CD4-positive, alpha-beta T cell (primary cell): ENCODE measurements at regions of chr9 and their contacts with region 1.

Region 1: GRCh38 chr9:35732122-35732799 is at the starts of genes CREB3 and TLN1:
- DNase-seq: peak; percentile 90 to 99 (median 96)
- ATAC-seq: peak; percentile 91
- H3K4me3 ChIP-seq: peak within 1 kb of the TSS; percentile 91
- H3K4me3 Mint-ChIP-seq: peak within 1 kb of the TSS; percentile 90
- H3K27ac ChIP-seq: peak within 1 kb of the TSS; percentile 89 to 95
- H3K27ac Mint-ChIP-seq: no peak within 1 kb of the TSS
- H3K4me1 ChIP-seq: peaks cover 71% of the 10 kb centered on the region
- H3K4me1 Mint-ChIP-seq: peaks cover 22% of the 10 kb centered on the region
- H3K27me3 ChIP-seq: no peaks in the 10 kb centered on the region
- H3K27me3 Mint-ChIP-seq: no peaks in the 10 kb centered on the region
- CTCF ChIP-seq: no peak
- total RNA-seq, gene CREB3: 13.7 to 15.4 TPM
- total RNA-seq, gene TLN1: 149 to 151 TPM

Region 2: DNA sequence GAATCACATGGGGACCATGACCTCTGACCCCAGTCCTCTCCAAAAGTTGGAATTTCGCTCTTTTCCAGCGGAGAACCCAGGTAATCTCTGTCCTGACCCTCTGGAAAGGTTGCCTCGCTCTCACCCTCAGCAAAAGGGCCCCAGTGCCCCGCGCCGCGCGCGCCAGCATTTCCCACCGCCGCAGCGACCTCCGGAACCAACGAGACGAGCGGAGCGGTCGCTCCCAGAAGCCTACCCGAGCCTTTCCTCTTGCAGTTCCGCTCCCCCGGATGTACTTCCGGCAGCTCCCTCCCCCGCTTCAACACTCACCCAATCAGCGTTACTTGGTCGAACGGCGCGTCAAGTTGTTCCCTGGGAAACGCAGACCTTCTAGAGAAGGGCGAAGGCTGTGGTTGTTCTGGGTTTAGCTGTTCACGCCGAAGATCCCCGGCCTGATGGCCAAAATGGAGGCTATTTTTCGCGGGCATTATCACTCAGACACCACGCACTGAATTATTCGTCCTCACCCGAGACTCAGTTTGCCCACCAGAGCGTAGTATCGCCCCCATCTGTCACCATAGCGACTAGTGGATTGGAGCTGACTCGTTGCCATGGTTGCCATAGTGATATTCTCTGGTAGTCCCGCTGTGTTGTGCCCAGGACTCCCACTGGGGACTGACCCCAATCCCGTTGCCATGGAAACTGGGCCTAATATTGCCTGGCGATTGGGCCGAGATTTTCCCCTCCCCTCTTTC is 629.2 kb before region 1 on chr9 and contains the start of gene STOML2:
- CTCF ChIA-PET with region 1: no interaction called
- POLR2A ChIA-PET with region 1: no interaction called
- intact Hi-C with region 1: loop called in 1 of 2 experiments (anchors 5 kb)
- DNase-seq: peak; percentile 84 to 97 (median 90)
- ATAC-seq: peak; percentile 98
- H3K4me3 ChIP-seq: peak within 1 kb of the TSS; percentile 99
- H3K4me3 Mint-ChIP-seq: peak within 1 kb of the TSS; percentile 92
- H3K27ac ChIP-seq: peak within 1 kb of the TSS; percentile 77 to 94
- H3K27ac Mint-ChIP-seq: peak within 1 kb of the TSS; percentile 89
- H3K4me1 ChIP-seq: peaks cover 28% of the 10 kb centered on the region
- H3K4me1 Mint-ChIP-seq: peaks cover 36% of the 10 kb centered on the region
- H3K27me3 ChIP-seq: no peaks in the 10 kb centered on the region
- H3K27me3 Mint-ChIP-seq: no peaks in the 10 kb centered on the region
- CTCF ChIP-seq: no peak
- total RNA-seq, gene STOML2: 29.8 to 30.5 TPM

Region 3: DNA sequence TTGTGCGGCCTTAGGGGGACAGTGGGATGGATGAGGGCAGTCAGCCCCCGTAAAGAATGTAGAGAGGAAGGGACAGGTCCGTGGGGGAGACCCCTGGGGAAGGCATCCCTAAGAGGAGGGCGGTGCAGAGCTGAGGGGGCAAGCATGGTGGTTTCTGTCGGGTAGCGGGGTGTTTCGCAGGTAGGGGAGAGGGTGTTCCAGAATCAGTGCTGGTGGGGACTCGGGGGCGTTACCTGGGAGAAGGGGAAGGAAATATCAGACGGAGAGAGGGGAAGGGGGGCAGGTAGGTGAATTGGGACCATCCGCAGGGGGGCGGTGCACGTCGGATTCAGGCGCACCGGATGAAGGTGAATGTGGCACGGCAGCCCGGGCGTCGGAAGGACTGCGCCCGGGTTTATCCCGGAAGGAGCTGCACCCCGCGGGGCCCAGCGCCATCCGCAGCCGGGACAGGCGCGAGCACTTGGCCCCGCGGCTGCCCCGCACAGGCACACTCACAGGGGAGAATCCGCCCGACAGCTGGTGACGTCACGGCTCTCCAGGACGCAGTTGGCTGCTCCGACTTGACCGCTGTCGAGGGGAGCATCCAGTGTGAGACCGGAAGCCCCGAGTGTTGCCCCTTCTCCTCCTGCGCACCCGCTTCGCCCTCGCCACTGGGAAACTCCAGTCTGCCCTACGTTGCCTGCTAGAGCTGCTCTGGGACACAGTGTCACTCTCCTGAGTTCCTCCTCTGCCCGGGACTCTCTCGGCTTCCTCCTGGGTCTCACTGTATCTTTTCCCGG is 115.4 kb before region 1 on chr9:
- CTCF ChIA-PET with region 1: interaction called, 7 read pairs
- POLR2A ChIA-PET with region 1: interaction called, 31 read pairs
- intact Hi-C with region 1: no loop called
- DNase-seq: peak; percentile 42 to 89 (median 62)
- ATAC-seq: peak; percentile 86
- H3K4me3 ChIP-seq: peak overlapping the region; percentile 77
- H3K4me3 Mint-ChIP-seq: peak overlapping the region; percentile 86
- H3K27ac ChIP-seq: peak overlapping the region; percentile 27 to 70
- H3K27ac Mint-ChIP-seq: peak overlapping the region; percentile 72
- H3K4me1 ChIP-seq: peaks cover 40% of the 10 kb centered on the region
- H3K4me1 Mint-ChIP-seq: peaks cover 50% of the 10 kb centered on the region
- H3K27me3 ChIP-seq: no peaks in the 10 kb centered on the region
- H3K27me3 Mint-ChIP-seq: no peaks in the 10 kb centered on the region
- CTCF ChIP-seq: peak; percentile 47

Region 4: DNA sequence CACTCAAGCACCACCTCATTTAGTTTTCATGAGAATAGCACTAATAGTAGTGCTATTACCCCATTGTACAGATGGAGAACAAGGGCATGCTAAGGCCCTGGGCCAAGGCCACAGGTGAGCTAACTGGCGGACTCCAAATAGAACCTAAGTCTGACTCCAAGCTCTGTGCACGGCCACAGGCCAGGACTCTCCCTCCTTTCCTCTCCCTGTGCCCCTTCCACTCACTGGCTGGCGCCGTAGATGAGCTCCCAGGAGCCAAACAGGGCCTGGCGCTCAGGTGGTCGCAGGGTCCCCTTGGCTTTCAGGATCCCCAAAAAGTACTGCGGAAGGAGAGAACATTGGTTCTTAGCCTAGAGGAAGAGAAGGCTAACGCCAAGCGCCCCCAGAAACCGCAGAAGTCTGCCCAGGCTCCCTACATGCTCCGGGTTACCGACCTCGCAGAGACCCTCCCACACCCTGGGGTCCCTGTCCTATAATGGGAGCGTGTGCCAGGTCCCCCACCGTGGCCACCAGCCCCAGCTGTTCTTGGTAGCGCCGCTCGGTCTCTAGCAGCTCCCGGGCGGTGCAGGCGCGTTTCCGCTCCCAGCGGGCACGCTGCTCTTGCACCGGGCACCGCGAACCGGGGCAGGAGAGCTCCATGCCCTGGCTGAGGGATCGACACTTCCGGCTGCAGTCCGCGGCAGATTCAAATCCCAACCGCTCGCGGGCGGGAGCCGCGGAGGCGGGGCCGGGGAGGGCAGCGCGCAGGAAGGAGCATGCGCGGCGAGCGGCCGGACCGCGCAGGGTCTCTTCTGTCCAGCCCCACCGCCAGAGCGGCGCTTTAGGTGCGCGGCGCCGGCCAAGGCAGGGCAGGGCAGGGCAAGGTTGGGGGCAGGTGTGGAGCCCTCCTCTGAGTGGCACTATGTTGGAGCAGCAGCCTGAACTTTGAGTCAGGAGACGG is 67.5 kb before region 1 on chr9 and contains the start of gene ARHGEF39:
- CTCF ChIA-PET with region 1: interaction called, 4 read pairs
- POLR2A ChIA-PET with region 1: interaction called, 61 read pairs
- intact Hi-C with region 1: no loop called
- DNase-seq: peak in 12 of 14 experiments; percentile 35 to 84 (median 55)
- ATAC-seq: peak; percentile 74
- H3K4me3 ChIP-seq: peak within 1 kb of the TSS; percentile 61
- H3K4me3 Mint-ChIP-seq: peak within 1 kb of the TSS; percentile 85
- H3K27ac ChIP-seq: peak within 1 kb of the TSS; percentile 31 to 50
- H3K27ac Mint-ChIP-seq: peak within 1 kb of the TSS; percentile 85
- H3K4me1 ChIP-seq: peaks cover 61% of the 10 kb centered on the region
- H3K4me1 Mint-ChIP-seq: peaks cover 71% of the 10 kb centered on the region
- H3K27me3 ChIP-seq: no peaks in the 10 kb centered on the region
- H3K27me3 Mint-ChIP-seq: no peaks in the 10 kb centered on the region
- CTCF ChIP-seq: no peak
- total RNA-seq, gene ARHGEF39: 0.08 to 0.17 TPM

Region 5: DNA sequence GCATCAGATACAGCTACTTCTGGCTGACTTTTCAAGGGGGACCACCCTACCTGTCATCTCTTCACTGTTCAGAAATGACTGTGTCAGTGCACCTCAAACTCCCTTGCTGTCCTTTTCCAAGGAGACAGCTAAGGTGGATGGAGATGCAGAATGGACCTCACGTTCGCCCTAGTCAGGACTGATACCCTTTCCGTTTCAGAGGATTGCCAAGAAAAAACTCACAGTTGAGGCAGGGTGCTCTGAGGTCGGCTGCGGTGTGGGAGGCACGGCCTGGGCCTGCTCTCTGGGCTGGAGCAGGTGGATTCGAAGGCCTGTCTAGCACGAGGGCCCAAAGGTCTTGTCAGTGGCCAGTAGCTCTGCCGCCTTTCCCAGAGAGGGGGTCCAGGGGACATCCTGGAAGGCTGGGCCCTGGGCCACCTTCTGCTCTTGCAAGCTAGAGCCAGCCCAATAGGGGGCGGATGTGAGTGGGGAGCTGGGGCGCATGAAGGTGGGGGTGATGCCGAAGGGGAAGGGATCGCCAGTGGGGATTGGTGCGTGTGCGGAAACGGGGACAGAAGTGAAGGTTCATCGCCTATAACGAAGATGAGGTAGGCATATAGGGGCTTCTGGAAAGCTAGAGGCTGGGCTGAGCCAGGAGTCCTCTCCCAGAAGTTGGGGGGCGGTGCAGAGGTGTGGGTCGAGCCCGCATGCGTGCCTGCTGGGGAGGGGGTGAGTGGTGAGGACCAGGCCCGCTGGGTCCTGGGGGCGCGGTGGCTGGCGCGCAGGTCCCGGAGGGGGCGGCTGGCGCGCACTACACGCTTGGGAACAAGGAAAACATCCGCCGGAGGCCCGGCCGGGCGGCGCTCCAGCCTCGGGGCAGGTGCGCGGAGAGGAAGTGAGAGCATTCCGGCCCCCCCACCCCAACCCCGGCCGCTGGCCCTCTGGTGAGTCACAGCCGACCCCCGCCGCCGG is 24.3 kb after region 1 on chr9:
- CTCF ChIA-PET with region 1: interaction called, 8 read pairs
- POLR2A ChIA-PET with region 1: interaction called, 12 read pairs
- intact Hi-C with region 1: loop called in 1 of 2 experiments (anchors 2 kb)
- DNase-seq: peak; percentile 68 to 87 (median 74)
- ATAC-seq: peak; percentile 97
- H3K4me3 ChIP-seq: peak overlapping the region; percentile 91
- H3K4me3 Mint-ChIP-seq: peak overlapping the region; percentile 95
- H3K27ac ChIP-seq: peak overlapping the region; percentile 72 to 80
- H3K27ac Mint-ChIP-seq: peak overlapping the region; percentile 81
- H3K4me1 ChIP-seq: peaks cover 20% of the 10 kb centered on the region
- H3K4me1 Mint-ChIP-seq: peaks cover 54% of the 10 kb centered on the region
- H3K27me3 ChIP-seq: no peaks in the 10 kb centered on the region
- H3K27me3 Mint-ChIP-seq: no peaks in the 10 kb centered on the region
- CTCF ChIP-seq: peak; percentile 77

Region 6: DNA sequence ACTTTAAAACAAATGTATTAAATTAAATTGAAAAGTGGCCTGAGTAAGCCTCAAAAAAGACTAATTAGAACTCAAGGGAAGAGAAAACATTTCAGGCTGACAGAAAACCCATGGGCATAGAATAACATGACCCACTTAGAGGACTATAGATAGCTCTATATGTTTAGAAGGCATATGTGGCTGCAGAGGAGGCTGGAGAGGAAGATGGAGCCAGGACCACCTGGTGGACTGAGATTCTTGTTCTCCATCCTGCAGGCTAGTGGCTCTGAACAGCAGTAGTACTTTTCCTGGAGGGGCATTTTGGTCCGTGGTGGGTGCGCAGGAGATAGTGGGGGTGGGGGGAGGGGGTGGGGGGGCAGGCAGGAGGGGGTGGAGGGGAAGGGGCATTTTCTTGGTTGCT is 48.8 kb after region 1 on chr9:
- CTCF ChIA-PET with region 1: no interaction called
- POLR2A ChIA-PET with region 1: no interaction called
- intact Hi-C with region 1: no loop called
- DNase-seq: no peak
- ATAC-seq: no peak
- H3K4me3 ChIP-seq: no peak overlapping the region
- H3K4me3 Mint-ChIP-seq: no peak overlapping the region
- H3K27ac ChIP-seq: no peak overlapping the region
- H3K27ac Mint-ChIP-seq: no peak overlapping the region
- H3K4me1 ChIP-seq: no peaks in the 10 kb centered on the region
- H3K4me1 Mint-ChIP-seq: no peaks in the 10 kb centered on the region
- H3K27me3 ChIP-seq: no peaks in the 10 kb centered on the region
- H3K27me3 Mint-ChIP-seq: no peaks in the 10 kb centered on the region
- CTCF ChIP-seq: no peak

Region 7: GRCh38 chr9:35882263-35882848 is 150.1 kb after region 1 on chr9:
- CTCF ChIA-PET with region 1: interaction called, 6 read pairs
- POLR2A ChIA-PET with region 1: no interaction called
- intact Hi-C with region 1: loop called in 1 of 2 experiments (anchors 1 kb)
- DNase-seq: peak; percentile 68 to 90 (median 78)
- ATAC-seq: peak; percentile 64
- H3K4me3 ChIP-seq: no peak overlapping the region
- H3K4me3 Mint-ChIP-seq: no peak overlapping the region
- H3K27ac ChIP-seq: no peak overlapping the region
- H3K27ac Mint-ChIP-seq: no peak overlapping the region
- H3K4me1 ChIP-seq: no peaks in the 10 kb centered on the region
- H3K4me1 Mint-ChIP-seq: no peaks in the 10 kb centered on the region
- H3K27me3 ChIP-seq: no peaks in the 10 kb centered on the region
- H3K27me3 Mint-ChIP-seq: peaks cover 13% of the 10 kb centered on the region
- CTCF ChIP-seq: peak; percentile 98